PC-3 (cell line): ENCODE measurements at regions of chr12 and their contacts with region 1.

Region 1: DNA sequence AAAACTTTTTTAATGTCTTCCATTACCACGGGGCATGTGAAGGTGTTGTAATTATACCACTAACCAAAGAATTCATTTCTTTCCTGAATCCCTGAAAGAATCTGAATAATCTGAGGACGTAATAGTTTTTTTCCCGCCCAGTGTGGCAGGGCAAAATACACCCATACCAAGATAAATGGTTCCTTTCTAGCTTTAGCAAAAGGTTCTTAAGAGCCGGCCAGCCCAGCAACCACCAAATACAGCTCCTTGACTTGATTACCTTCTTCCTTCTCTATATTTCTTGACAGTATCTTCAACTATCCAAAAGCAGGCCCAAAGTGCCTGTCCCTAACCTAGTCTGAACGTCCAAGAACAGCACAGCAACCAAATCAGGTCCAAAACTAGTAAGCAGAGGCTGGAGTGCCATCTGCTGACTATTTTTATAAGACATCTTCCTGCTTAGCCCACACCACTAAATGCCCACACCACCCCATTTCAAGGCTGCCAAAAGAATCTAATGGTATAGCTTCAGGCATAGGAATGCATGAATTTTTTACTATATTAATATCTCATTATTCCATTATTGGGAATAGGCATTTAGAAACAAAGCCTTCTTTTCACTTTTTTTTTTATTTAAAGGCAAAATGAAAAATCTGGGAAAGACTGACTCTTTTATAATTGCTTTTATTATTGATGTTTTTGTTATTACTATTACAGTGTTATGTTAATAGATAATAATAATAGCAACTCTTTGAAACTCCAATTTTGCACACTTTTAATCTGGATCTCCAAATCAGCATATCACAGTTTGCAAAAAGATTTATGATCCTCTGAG is 524.4 kb downstream of the MED13L start:
- DNase-seq: peak; percentile 89
- ATAC-seq: peak; percentile 83
- H3K4me3 ChIP-seq: no peak overlapping the region
- H3K27ac ChIP-seq: no peak overlapping the region
- H3K4me1 ChIP-seq: peaks cover 9% of the 10 kb centered on the region; the same call in 1 of the 2 replicates
- H3K27me3 ChIP-seq: peaks cover 58% of the 10 kb centered on the region
- CTCF ChIP-seq: peak; percentile 88

Region 2: DNA sequence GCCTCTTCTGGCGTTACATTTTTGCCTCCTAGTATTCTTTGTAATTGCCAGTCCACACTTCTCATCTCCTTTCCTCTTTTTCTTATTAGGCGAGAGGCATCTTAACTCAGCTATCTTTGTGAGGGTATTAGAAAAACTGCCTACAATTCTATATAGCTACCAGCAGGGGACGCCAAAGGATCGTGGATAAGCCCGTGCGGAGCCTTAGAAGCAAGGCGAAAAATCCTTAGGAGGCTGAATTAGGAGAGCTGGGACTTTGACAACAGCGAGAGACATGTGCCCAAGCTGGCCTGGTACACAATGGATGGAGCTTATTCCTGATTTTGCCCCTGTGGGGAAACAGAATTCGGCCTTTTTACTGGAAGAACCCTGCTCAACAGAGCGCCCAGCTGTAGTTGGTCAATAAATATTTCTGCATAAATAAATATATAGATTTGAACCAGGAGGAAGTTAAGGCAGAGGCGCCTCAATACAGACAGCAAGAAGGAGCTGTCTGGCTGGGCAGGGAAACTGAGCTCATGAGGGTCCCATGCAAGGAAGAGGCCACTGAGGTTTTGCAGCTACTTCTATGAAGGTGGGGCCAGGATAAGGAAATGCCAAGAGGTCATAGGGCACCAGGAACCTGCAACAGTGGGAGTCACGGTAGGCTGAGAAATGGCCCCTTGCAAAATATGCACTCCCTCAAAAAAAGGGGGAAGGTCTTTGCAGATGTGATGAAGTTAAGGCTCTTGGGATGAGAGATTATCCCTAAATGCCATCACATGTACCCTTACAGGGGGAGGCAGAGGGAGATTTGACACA is 1772.4 kb before region 1 on chr12:
- CTCF ChIA-PET with region 1: no interaction called
- POLR2A ChIA-PET with region 1: no interaction called
- intact Hi-C with region 1: loop called (anchors 10 kb)
- DNase-seq: peak; percentile 80
- ATAC-seq: peak; percentile 86
- H3K4me3 ChIP-seq: no peak overlapping the region
- H3K27ac ChIP-seq: no peak overlapping the region
- H3K4me1 ChIP-seq: no peaks in the 10 kb centered on the region
- H3K27me3 ChIP-seq: peaks cover 59% of the 10 kb centered on the region
- CTCF ChIP-seq: peak; percentile 99

Region 3: GRCh38 chr12:114668151-114668885 is 1084.8 kb before region 1 on chr12:
- CTCF ChIA-PET with region 1: interaction called, 4 read pairs
- POLR2A ChIA-PET with region 1: interaction called, 3 read pairs
- intact Hi-C with region 1: loop called (anchors 1 kb)
- DNase-seq: peak; percentile 98
- ATAC-seq: peak; percentile 45
- H3K4me3 ChIP-seq: peak overlapping the region; percentile 94
- H3K27ac ChIP-seq: peak overlapping the region; percentile 89
- H3K4me1 ChIP-seq: peaks cover 77% of the 10 kb centered on the region
- H3K27me3 ChIP-seq: no peaks in the 10 kb centered on the region
- CTCF ChIP-seq: peak; percentile 75

Region 4: GRCh38 chr12:115155665-115156645 is 597.2 kb before region 1 on chr12:
- CTCF ChIA-PET with region 1: no interaction called
- POLR2A ChIA-PET with region 1: no interaction called
- intact Hi-C with region 1: loop called (anchors 10 kb)
- DNase-seq: peak; percentile 99
- ATAC-seq: peak; percentile 91
- H3K4me3 ChIP-seq: no peak overlapping the region
- H3K27ac ChIP-seq: peak overlapping the region; percentile 96
- H3K4me1 ChIP-seq: peaks cover 21% of the 10 kb centered on the region
- H3K27me3 ChIP-seq: no peaks in the 10 kb centered on the region
- CTCF ChIP-seq: no peak

Region 5: DNA sequence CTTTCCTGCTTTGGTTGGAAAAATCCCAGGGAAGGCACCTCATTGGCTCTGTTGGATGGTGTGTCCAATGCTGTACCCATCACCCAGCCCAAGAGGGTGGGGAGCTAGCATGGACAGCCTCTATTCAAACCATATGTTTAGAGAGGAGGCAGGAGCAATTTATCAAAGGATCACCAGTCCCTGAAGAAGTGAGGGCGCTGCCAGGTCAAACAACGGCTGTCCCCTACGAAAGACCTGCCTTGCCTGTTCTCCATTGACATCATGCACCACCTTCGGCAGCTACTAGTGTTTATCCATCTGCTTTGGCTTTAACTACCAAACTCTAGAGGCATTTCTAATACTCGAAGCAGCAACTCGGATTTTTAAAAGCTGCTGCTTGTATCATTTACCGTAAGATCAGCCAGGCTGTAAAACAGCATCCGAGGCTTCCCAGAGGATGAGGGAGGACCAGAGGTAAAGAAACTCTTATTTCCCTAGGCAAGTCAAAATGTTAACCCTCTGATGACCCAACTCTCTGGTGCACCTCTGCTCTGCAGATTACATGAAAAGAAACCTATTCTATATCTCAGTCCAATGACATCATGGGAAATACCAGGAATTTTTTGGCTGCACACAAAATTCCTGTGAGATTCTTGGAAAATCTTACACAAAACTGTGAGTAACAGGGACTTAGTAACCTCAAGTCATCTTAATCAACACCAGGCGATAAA is 348.2 kb before region 1 on chr12:
- CTCF ChIA-PET with region 1: no interaction called
- POLR2A ChIA-PET with region 1: no interaction called
- intact Hi-C with region 1: loop called (anchors 5 kb)
- DNase-seq: peak; percentile 68
- ATAC-seq: no peak; the same call in 1 of the 2 replicates
- H3K4me3 ChIP-seq: no peak overlapping the region
- H3K27ac ChIP-seq: no peak overlapping the region
- H3K4me1 ChIP-seq: peaks cover 5% of the 10 kb centered on the region
- H3K27me3 ChIP-seq: no peaks in the 10 kb centered on the region
- CTCF ChIP-seq: no peak

Region 6: DNA sequence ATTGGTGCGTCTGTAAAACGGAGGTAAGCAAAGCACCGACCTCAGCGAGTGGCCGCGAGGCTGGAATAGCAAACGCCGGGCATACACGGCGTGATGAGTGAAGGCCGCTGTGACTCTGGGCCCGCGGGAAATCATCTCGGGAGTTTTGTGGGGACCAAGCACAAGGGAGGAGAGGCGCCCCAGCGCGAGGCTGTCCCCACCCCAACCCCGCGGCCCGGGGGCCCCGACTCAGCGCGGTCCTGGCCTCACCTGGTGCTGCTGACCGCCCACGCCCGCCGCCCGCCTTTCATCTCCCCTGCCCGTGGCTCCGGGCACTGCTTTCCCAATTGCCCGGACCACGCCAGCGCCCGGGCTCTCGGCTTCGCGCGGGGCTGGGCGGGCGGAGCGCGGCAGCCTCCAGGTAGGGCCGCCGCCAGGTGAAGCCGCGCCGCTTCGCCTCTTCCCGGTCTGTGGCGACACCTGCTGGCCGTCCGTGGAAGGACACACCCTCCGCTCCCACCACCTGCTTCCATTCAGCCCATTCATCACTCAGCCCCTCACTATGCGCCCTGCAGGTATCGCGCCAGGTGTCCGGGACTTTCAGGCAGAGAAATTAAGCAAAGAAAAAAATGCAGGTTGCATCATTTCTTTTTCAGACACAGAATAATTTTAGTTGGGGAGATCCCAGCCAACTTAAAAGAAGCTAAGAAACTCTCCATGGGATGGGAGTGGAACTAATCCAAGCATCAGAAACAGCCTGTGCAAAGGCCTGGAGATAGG is 164.0 kb after region 1 on chr12:
- CTCF ChIA-PET with region 1: no interaction called
- POLR2A ChIA-PET with region 1: no interaction called
- intact Hi-C with region 1: loop called (anchors 2 kb)
- DNase-seq: peak; percentile 83
- ATAC-seq: peak; percentile 94
- H3K4me3 ChIP-seq: peak overlapping the region; percentile 64
- H3K27ac ChIP-seq: no peak overlapping the region
- H3K4me1 ChIP-seq: no peaks in the 10 kb centered on the region
- H3K27me3 ChIP-seq: peaks cover 6% of the 10 kb centered on the region; the same call in 1 of the 2 replicates
- CTCF ChIP-seq: peak; percentile 93